ENCODE measurements at regions of chr13 and their contacts with region 1.

Region 1: GRCh38 chr13:109256866-109257760 is 529.3 kb downstream of the IRS2 start:
- DNase-seq: no peak
- H3K4me3 ChIP-seq: no peak overlapping the region
- H3K27ac ChIP-seq: peak overlapping the region; percentile 75 to 85 (median 80)
- H3K4me1 ChIP-seq: peaks cover 8 to 31% (median 12%) of the 10 kb centered on the region in 4 donors
- H3K27me3 ChIP-seq: no peaks in the 10 kb centered on the region
- CTCF ChIP-seq: no peak
- EP300 ChIP-seq: peak; percentile 93
- POLR2A ChIP-seq: no peak

Region 2: DNA sequence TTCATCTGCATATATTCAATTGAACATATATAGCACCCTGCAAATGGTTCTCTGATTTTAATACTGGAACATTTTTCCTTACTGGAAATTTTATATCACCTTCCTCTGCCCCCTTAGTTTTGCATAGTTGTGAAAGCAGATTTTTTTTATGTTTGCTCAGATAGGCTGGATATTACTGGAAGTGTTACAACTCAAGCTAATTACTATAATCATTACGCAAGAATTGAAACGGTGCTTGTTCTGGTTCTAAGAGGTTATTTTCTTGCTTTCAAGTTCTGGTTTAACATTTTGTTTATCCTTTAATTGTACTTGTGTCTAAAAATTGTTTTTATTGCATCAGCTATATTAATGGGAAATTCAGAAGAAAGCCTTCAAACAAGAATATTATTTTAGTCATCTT is 723.3 kb before region 1 on chr13:
- intact Hi-C with region 1: no loop called
- DNase-seq: no peak
- H3K4me3 ChIP-seq: no peak overlapping the region
- H3K27ac ChIP-seq: no peak overlapping the region
- H3K4me1 ChIP-seq: no peaks in the 10 kb centered on the region
- H3K27me3 ChIP-seq: peaks cover 0 to 3% (median 0%) of the 10 kb centered on the region in 4 donors
- CTCF ChIP-seq: no peak
- EP300 ChIP-seq: no peak
- POLR2A ChIP-seq: no peak

Region 3: GRCh38 chr13:109156181-109156935 is 100.8 kb before region 1 on chr13:
- intact Hi-C with region 1: loop called (anchors 5 kb)
- DNase-seq: no peak
- H3K4me3 ChIP-seq: peak overlapping the region; percentile 8 to 37 (median 22)
- H3K27ac ChIP-seq: peak overlapping the region; percentile 83 to 90 (median 87)
- H3K4me1 ChIP-seq: peaks cover 6 to 61% (median 40%) of the 10 kb centered on the region in 4 donors
- H3K27me3 ChIP-seq: no peaks in the 10 kb centered on the region
- CTCF ChIP-seq: no peak
- EP300 ChIP-seq: no peak
- POLR2A ChIP-seq: no peak

Measured in esophagus muscularis mucosa (tissue), 4 donors.